IMR-90 (cell line): ENCODE measurements at regions of chr17 and their contacts with region 1.

Region 1: DNA sequence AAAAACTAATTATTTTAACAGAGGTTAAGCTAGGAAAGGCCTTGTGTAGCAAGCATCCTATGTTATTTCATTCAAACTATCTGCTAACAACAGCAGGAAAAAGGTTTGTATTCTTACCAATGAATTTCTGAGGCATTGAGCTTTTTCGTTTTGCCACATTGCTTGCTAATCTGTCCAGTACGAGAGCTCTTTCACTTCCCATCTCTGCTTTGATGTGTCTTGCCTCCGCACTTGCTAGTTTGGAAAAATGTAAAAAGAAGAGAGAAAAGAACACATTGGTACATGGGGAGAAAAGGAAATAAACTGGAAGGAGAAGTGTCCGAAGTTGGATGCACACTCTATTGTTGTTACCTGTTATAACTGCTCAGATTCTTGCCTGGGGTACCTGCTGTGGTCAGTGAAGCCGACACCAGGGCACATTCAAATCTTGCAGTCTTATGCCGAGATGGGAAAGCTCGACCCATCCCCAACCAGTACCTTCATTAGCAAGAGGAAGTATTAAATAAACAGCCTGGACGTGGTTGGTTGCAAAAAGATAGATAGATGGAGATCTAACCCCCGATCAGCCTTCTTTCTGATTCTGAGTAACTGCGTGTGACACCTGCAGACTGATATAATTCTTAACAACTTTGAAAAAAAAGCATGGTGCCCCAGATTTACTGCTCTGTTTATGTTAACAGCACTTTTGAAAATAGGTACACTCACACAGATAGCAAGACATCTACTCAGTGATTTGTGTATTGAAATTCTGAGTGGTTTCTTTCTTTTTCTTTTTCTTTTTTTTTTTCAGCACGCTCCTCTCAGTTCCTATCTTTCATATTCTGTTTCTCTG is 40.0 kb downstream of the GRB7 start:
- DNase-seq: no peak
- ATAC-seq: no peak
- H3K4me3 ChIP-seq: no peak overlapping the region
- H3K27ac ChIP-seq: no peak overlapping the region
- H3K4me1 ChIP-seq: no peaks in the 10 kb centered on the region
- H3K27me3 ChIP-seq: peaks cover 59% of the 10 kb centered on the region
- CTCF ChIP-seq: no peak
- POLR2A ChIP-seq: no peak
- RAD21 ChIP-seq: no peak

Region 2: DNA sequence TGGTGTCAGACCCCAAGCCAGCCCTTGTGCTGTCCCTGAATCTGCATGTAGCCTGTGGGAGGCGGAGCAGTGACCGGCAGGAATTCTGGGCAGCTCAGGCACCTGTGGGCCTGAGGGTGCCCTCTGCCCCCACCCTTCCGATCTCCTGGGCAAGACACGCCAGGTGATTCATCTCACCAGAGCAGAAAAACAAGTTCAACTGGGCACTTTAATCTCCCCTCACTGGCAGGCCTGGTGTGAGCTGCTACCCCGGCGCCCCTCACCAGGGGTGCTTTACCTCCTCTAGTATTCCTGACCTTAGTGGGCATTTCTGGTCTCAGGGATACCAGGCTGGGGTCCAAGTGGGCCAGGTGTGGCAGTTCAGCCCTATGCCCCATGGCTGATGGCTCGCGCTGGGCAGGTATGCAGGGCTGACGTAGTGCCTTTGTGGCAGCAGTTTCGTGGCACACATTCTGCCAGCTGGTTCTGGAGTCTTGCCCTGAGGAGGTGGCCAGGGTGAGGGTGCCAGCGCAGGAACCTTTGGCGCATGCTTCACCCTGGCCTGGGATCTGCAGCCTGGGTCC is 71.9 kb before region 1 on chr17:
- CTCF ChIA-PET with region 1: no interaction called
- POLR2A ChIA-PET with region 1: no interaction called
- dilution Hi-C with region 1: no loop called
- in situ Hi-C with region 1: no loop called
- intact Hi-C with region 1: no loop called
- DNase-seq: no peak
- ATAC-seq: no peak
- H3K4me3 ChIP-seq: no peak overlapping the region
- H3K27ac ChIP-seq: no peak overlapping the region
- H3K4me1 ChIP-seq: peaks cover 18% of the 10 kb centered on the region
- H3K27me3 ChIP-seq: no peaks in the 10 kb centered on the region
- CTCF ChIP-seq: no peak
- POLR2A ChIP-seq: no peak
- RAD21 ChIP-seq: no peak

Region 3: GRCh38 chr17:39792526-39793221 is 14.9 kb after region 1 on chr17:
- CTCF ChIA-PET with region 1: no interaction called
- POLR2A ChIA-PET with region 1: interaction called, 10 read pairs
- dilution Hi-C with region 1: no loop called
- in situ Hi-C with region 1: no loop called
- intact Hi-C with region 1: no loop called
- DNase-seq: no peak
- ATAC-seq: no peak
- H3K4me3 ChIP-seq: no peak overlapping the region
- H3K27ac ChIP-seq: no peak overlapping the region
- H3K4me1 ChIP-seq: no peaks in the 10 kb centered on the region
- H3K27me3 ChIP-seq: peaks cover 31% of the 10 kb centered on the region
- CTCF ChIP-seq: no peak
- POLR2A ChIP-seq: no peak
- RAD21 ChIP-seq: no peak

Region 4: DNA sequence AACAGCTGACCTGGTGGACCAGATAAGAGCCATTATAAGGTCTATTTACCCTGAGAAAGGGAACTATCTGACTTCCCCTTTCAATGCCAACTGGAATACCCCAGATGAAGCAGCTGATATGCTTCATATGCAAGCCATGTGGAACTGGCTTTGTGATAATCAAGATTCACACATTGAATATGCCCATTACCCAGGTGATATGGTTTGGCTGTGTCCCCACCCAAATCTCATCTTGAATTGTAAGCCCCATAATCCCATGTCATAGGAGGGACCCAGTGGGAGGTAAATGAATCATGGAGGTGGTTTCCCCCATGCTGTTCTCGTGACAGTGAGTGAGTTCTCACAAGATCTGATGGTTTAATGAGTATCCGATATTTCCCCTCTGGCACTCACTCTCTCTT is 44.3 kb after region 1 on chr17:
- CTCF ChIA-PET with region 1: no interaction called
- POLR2A ChIA-PET with region 1: no interaction called
- dilution Hi-C with region 1: no loop called
- in situ Hi-C with region 1: no loop called
- intact Hi-C with region 1: loop called (anchors 5 kb)
- DNase-seq: no peak
- ATAC-seq: no peak
- H3K4me3 ChIP-seq: no peak overlapping the region
- H3K27ac ChIP-seq: no peak overlapping the region
- H3K4me1 ChIP-seq: no peaks in the 10 kb centered on the region
- H3K27me3 ChIP-seq: peaks cover 16% of the 10 kb centered on the region
- CTCF ChIP-seq: no peak
- POLR2A ChIP-seq: no peak
- RAD21 ChIP-seq: no peak

Region 5: GRCh38 chr17:39854909-39855308 is 77.2 kb after region 1 on chr17:
- CTCF ChIA-PET with region 1: no interaction called
- POLR2A ChIA-PET with region 1: no interaction called
- dilution Hi-C with region 1: no loop called
- in situ Hi-C with region 1: no loop called
- intact Hi-C with region 1: loop called (anchors 5 kb)
- DNase-seq: no peak
- ATAC-seq: no peak
- H3K4me3 ChIP-seq: no peak overlapping the region
- H3K27ac ChIP-seq: no peak overlapping the region
- H3K4me1 ChIP-seq: no peaks in the 10 kb centered on the region
- H3K27me3 ChIP-seq: peaks cover 29% of the 10 kb centered on the region
- CTCF ChIP-seq: no peak
- POLR2A ChIP-seq: no peak
- RAD21 ChIP-seq: no peak